Prostate gland (tissue), 2 donors: ENCODE measurements at regions of chr12 and their contacts with region 1.

Region 1: GRCh38 chr12:77932216-77932615 is 101.5 kb downstream of the NAV3 start:
- DNase-seq: no peak
- H3K4me3 ChIP-seq: no peak overlapping the region
- H3K27ac ChIP-seq: no peak overlapping the region
- H3K4me1 ChIP-seq: no peaks in the 10 kb centered on the region
- H3K27me3 ChIP-seq: no peaks in the 10 kb centered on the region
- CTCF ChIP-seq: no peak
- POLR2A ChIP-seq: no peak

Region 2: GRCh38 chr12:76259660-76260389 is 1672.4 kb before region 1 on chr12:
- intact Hi-C with region 1: loop called (anchors 10 kb)
- DNase-seq: peak; percentile 34
- H3K4me3 ChIP-seq: no peak overlapping the region
- H3K27ac ChIP-seq: peak overlapping the region; percentile 65 to 72
- H3K4me1 ChIP-seq: no peaks in the 10 kb centered on the region
- H3K27me3 ChIP-seq: no peaks in the 10 kb centered on the region
- CTCF ChIP-seq: no peak
- POLR2A ChIP-seq: no peak

Region 3: GRCh38 chr12:77893918-77894317 is 38.3 kb before region 1 on chr12:
- intact Hi-C with region 1: no loop called
- DNase-seq: no peak
- H3K4me3 ChIP-seq: no peak overlapping the region
- H3K27ac ChIP-seq: no peak overlapping the region
- H3K4me1 ChIP-seq: no peaks in the 10 kb centered on the region
- H3K27me3 ChIP-seq: no peaks in the 10 kb centered on the region
- CTCF ChIP-seq: no peak
- POLR2A ChIP-seq: no peak